ENCODE measurements at regions of chr18 and their contacts with region 1.

Region 1: GRCh38 chr18:23828426-23828825 is 139.2 kb downstream of the LAMA3 start:
- DNase-seq: no peak
- H3K4me3 ChIP-seq: no peak overlapping the region
- H3K27ac ChIP-seq: no peak overlapping the region
- H3K4me1 ChIP-seq: peaks cover 8 to 20% of the 10 kb centered on the region in 2 donors
- H3K27me3 ChIP-seq: no peaks in the 10 kb centered on the region
- CTCF ChIP-seq: no peak

Region 2: GRCh38 chr18:23479829-23480505 is 348.5 kb before region 1 on chr18:
- intact Hi-C with region 1: no loop called
- DNase-seq: no peak
- H3K4me3 ChIP-seq: no peak overlapping the region
- H3K27ac ChIP-seq: no peak overlapping the region
- H3K4me1 ChIP-seq: peaks cover 0 to 7% of the 10 kb centered on the region in 2 donors
- H3K27me3 ChIP-seq: no peaks in the 10 kb centered on the region
- CTCF ChIP-seq: no peak

Region 3: GRCh38 chr18:23861805-23862470 is 33.5 kb after region 1 on chr18:
- intact Hi-C with region 1: loop called (anchors 5 kb)
- DNase-seq: no peak
- H3K4me3 ChIP-seq: no peak overlapping the region
- H3K27ac ChIP-seq: peak overlapping the region; percentile 64 to 76
- H3K4me1 ChIP-seq: peaks cover 9 to 25% of the 10 kb centered on the region in 2 donors
- H3K27me3 ChIP-seq: no peaks in the 10 kb centered on the region
- CTCF ChIP-seq: no peak

Measured in ascending aorta (tissue), 2 donors.